MCF 10A (cell line): ENCODE measurements at regions of chr10 and their contacts with region 1.

Region 1: GRCh38 chr10:24518981-24519597 is 204.6 kb downstream of the ARHGAP21 start:
- DNase-seq: peak; percentile 65
- H3K4me3 Mint-ChIP-seq: no peak overlapping the region
- H3K27ac Mint-ChIP-seq: no peak overlapping the region
- H3K4me1 Mint-ChIP-seq: peaks cover 7% of the 10 kb centered on the region
- H3K27me3 Mint-ChIP-seq: no peaks in the 10 kb centered on the region
- CTCF ChIP-seq: peak; percentile 56

Region 2: GRCh38 chr10:24360282-24361127 is 158.6 kb before region 1 on chr10:
- CTCF ChIA-PET with region 1: interaction called, 22 read pairs
- POLR2A ChIA-PET with region 1: no interaction called
- intact Hi-C with region 1: loop called (anchors 5 kb)
- DNase-seq: peak; percentile 87
- H3K4me3 Mint-ChIP-seq: no peak overlapping the region
- H3K27ac Mint-ChIP-seq: no peak overlapping the region
- H3K4me1 Mint-ChIP-seq: peaks cover 6% of the 10 kb centered on the region
- H3K27me3 Mint-ChIP-seq: no peaks in the 10 kb centered on the region
- CTCF ChIP-seq: peak; percentile 71

Region 3: GRCh38 chr10:24374134-24374915 is 144.8 kb before region 1 on chr10:
- CTCF ChIA-PET with region 1: interaction called, 11 read pairs
- POLR2A ChIA-PET with region 1: no interaction called
- intact Hi-C with region 1: no loop called
- DNase-seq: no peak
- H3K4me3 Mint-ChIP-seq: no peak overlapping the region
- H3K27ac Mint-ChIP-seq: peak overlapping the region; percentile 35
- H3K4me1 Mint-ChIP-seq: no peaks in the 10 kb centered on the region
- H3K27me3 Mint-ChIP-seq: no peaks in the 10 kb centered on the region
- CTCF ChIP-seq: no peak

Region 4: DNA sequence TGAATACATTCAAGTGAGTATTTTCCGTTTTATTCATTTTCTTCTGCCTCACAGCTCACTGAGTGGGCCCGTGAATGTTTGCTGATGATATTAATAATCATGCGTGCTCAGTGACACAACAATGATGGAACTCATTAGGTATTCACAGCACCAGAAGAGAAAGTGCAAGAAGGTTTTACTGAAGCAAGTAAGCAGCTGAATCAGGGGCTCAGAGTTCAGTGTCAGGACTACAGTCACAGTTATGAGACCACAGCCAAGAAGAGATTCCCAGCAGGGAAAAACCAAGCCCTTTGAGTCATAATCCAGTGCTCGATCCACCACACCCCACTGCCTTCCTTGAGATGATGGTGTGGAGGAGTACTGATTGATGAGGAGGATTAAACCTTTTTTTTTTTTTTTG is 62.8 kb before region 1 on chr10:
- CTCF ChIA-PET with region 1: interaction called, 10 read pairs
- POLR2A ChIA-PET with region 1: no interaction called
- intact Hi-C with region 1: no loop called
- DNase-seq: peak; percentile 72
- H3K4me3 Mint-ChIP-seq: peak overlapping the region; percentile 44
- H3K27ac Mint-ChIP-seq: peak overlapping the region; percentile 73
- H3K4me1 Mint-ChIP-seq: peaks cover 23% of the 10 kb centered on the region
- H3K27me3 Mint-ChIP-seq: no peaks in the 10 kb centered on the region
- CTCF ChIP-seq: no peak

Region 5: DNA sequence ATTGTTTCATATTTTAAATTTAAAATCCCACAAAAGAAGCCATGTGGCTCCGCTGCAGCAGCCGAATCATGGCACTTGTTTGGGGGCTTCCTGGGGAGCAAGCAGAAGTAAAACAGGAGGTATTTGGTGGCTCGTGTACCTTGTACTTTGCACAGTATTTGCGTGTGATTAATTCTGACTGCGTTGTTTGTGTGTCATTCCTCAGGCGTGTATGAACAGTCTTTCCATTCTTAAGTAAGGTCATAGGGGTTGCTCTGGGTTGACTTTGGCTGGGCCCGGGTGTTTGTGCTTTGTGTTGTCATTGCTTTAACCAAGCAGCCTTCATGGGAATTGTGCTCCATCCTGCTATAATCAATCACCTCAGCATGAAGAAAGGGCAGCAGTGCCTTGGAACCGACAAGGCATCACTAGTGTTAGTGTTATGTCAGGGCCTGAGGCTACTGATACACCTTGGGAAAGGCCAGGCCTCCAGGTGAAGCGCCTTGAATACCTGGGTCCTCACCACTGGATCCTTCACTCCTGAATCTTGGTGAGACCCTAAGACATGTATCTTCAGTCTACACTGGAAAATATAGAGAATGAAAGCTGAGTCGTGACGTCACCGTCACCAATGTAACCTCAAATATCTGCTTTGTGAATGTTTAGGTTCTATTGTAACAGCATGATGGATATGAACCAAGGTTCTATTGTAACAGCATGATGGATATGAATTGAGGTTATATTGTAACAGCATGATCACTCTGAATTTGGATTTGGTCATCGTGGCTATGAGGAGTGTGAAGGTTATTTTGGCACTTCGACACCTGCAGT is 22.4 kb after region 1 on chr10:
- CTCF ChIA-PET with region 1: interaction called, 71 read pairs
- POLR2A ChIA-PET with region 1: no interaction called
- intact Hi-C with region 1: no loop called
- DNase-seq: no peak
- H3K4me3 Mint-ChIP-seq: no peak overlapping the region
- H3K27ac Mint-ChIP-seq: no peak overlapping the region
- H3K4me1 Mint-ChIP-seq: no peaks in the 10 kb centered on the region
- H3K27me3 Mint-ChIP-seq: no peaks in the 10 kb centered on the region
- CTCF ChIP-seq: no peak